ENCODE measurements at regions of chr19 and their contacts with region 1.

Region 1: GRCh38 chr19:10259162-10259905 is 7.3 kb downstream of the MRPL4 start:
- DNase-seq: peak; percentile 90
- ATAC-seq: peak; percentile 89
- H3K4me3 ChIP-seq: no peak overlapping the region
- H3K4me3 Mint-ChIP-seq: no peak overlapping the region
- H3K27ac ChIP-seq: no peak overlapping the region
- H3K27ac Mint-ChIP-seq: no peak overlapping the region
- H3K4me1 ChIP-seq: peaks cover 0 to 3% of the 10 kb centered on the region in 2 donors
- H3K4me1 Mint-ChIP-seq: no peaks in the 10 kb centered on the region
- H3K27me3 ChIP-seq: no peaks in the 10 kb centered on the region
- H3K27me3 Mint-ChIP-seq: no peaks in the 10 kb centered on the region
- CTCF ChIP-seq: peak; percentile 80

Region 2: GRCh38 chr19:9934132-9934950 is 325.0 kb before region 1 on chr19:
- CTCF ChIA-PET with region 1: interaction called, 27 read pairs
- POLR2A ChIA-PET with region 1: no interaction called
- intact Hi-C with region 1: no loop called
- DNase-seq: peak; percentile 84
- ATAC-seq: peak; percentile 82
- H3K4me3 ChIP-seq: no peak overlapping the region
- H3K4me3 Mint-ChIP-seq: no peak overlapping the region
- H3K27ac ChIP-seq: no peak overlapping the region
- H3K27ac Mint-ChIP-seq: no peak overlapping the region
- H3K4me1 ChIP-seq: peaks cover 22 to 30% of the 10 kb centered on the region in 2 donors
- H3K4me1 Mint-ChIP-seq: peaks cover 26% of the 10 kb centered on the region
- H3K27me3 ChIP-seq: peaks cover 0 to 60% (median 34%) of the 10 kb centered on the region in 4 experiments
- H3K27me3 Mint-ChIP-seq: peaks cover 51% of the 10 kb centered on the region
- CTCF ChIP-seq: peak; percentile 89

Region 3: GRCh38 chr19:10238172-10238783 is 21.1 kb before region 1 on chr19:
- CTCF ChIA-PET with region 1: interaction called, 13 read pairs
- POLR2A ChIA-PET with region 1: interaction called, 3 read pairs
- intact Hi-C with region 1: no loop called
- DNase-seq: peak; percentile 51
- ATAC-seq: no peak
- H3K4me3 ChIP-seq: no peak overlapping the region
- H3K4me3 Mint-ChIP-seq: peak overlapping the region; percentile 29
- H3K27ac ChIP-seq: no peak overlapping the region
- H3K27ac Mint-ChIP-seq: peak overlapping the region; percentile 53
- H3K4me1 ChIP-seq: peaks cover 40 to 63% of the 10 kb centered on the region in 2 donors
- H3K4me1 Mint-ChIP-seq: peaks cover 40% of the 10 kb centered on the region
- H3K27me3 ChIP-seq: no peaks in the 10 kb centered on the region
- H3K27me3 Mint-ChIP-seq: no peaks in the 10 kb centered on the region
- CTCF ChIP-seq: no peak

Region 4: GRCh38 chr19:10286803-10287737 is 27.7 kb after region 1 on chr19 and contains the start of gene ICAM4:
- CTCF ChIA-PET with region 1: interaction called, 11 read pairs
- POLR2A ChIA-PET with region 1: no interaction called
- intact Hi-C with region 1: no loop called
- DNase-seq: peak; percentile 66
- ATAC-seq: no peak
- H3K4me3 ChIP-seq: peak within 1 kb of the TSS in 3 of 5 experiments; percentile 18 to 23 (median 19)
- H3K4me3 Mint-ChIP-seq: peak within 1 kb of the TSS; percentile 77
- H3K27ac ChIP-seq: no peak within 1 kb of the TSS
- H3K27ac Mint-ChIP-seq: peak within 1 kb of the TSS; percentile 71
- H3K4me1 ChIP-seq: peaks cover 61% of the 10 kb centered on the region in 2 donors
- H3K4me1 Mint-ChIP-seq: peaks cover 58% of the 10 kb centered on the region
- H3K27me3 ChIP-seq: peaks cover 0 to 53% (median 33%) of the 10 kb centered on the region in 4 experiments
- H3K27me3 Mint-ChIP-seq: peaks cover 22% of the 10 kb centered on the region
- CTCF ChIP-seq: no peak
- total RNA-seq, gene ICAM4: 0.44 and 0.51 TPM in 2 replicates